ENCODE measurements at regions of chr12 and their contacts with region 1.

Region 1: DNA sequence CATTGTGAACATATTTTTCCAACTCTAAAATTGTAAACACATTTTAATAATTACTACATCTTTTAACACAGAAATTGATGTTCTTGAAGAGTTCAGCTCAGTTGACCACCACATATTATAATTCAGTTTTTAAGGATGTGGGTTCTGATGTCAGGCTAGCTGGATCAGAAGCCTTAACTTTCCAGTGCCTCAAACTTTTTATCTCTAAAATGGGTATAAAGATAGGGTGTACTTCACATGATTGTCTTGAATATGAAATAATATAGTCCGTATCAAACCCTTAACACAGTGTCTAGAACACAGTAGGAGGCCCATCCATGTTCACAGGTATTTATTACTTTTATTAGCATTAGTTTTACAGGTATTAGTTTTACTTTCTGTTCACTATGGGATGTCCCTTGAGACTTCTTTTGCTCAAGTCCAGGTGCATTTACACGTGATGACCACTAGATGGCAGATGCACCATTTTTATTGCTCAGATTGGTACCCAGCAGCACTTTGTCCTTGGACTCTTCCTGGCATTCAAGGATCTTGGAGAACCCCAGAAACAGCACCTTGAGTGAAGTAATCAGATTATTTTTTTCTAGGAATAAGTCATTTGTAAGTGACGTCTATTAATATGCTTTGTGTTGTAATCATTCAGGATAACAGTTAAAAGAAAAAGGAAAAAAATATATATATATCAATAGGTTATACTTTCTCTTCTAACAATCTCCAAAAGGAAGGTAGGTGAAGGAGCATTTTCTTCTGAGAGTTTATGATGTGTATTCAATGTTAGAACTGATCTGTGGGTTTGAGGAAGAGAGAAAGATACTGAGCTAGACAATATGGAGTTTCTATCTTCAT is 580.2 kb downstream of the ETNK1 start:
- DNase-seq: peak; percentile 6
- ATAC-seq: no peak; the same call in 1 of the 2 replicates
- H3K4me3 ChIP-seq: no peak overlapping the region
- H3K27ac ChIP-seq: no peak overlapping the region
- H3K4me1 ChIP-seq: no peaks in the 10 kb centered on the region
- H3K27me3 ChIP-seq: no peaks in the 10 kb centered on the region
- CTCF ChIP-seq: peak; percentile 11 to 83 (median 75); a peak in 4 of 6 replicates
- POLR2A ChIP-seq: no peak
- RAD21 ChIP-seq: peak; percentile 51

Region 2: GRCh38 chr12:23169012-23169695 is 36.0 kb before region 1 on chr12:
- CTCF ChIA-PET with region 1: no interaction called
- POLR2A ChIA-PET with region 1: no interaction called
- RAD21 ChIA-PET with region 1: no interaction called
- intact Hi-C with region 1: no loop called
- DNase-seq: no peak
- ATAC-seq: no peak
- H3K4me3 ChIP-seq: no peak overlapping the region
- H3K27ac ChIP-seq: no peak overlapping the region
- H3K4me1 ChIP-seq: no peaks in the 10 kb centered on the region
- H3K27me3 ChIP-seq: no peaks in the 10 kb centered on the region
- CTCF ChIP-seq: no peak
- POLR2A ChIP-seq: no peak
- RAD21 ChIP-seq: no peak

Region 3: GRCh38 chr12:23221066-23221465 is 15.9 kb after region 1 on chr12:
- CTCF ChIA-PET with region 1: no interaction called
- POLR2A ChIA-PET with region 1: no interaction called
- RAD21 ChIA-PET with region 1: no interaction called
- intact Hi-C with region 1: no loop called
- DNase-seq: no peak
- ATAC-seq: no peak
- H3K4me3 ChIP-seq: no peak overlapping the region
- H3K27ac ChIP-seq: no peak overlapping the region
- H3K4me1 ChIP-seq: no peaks in the 10 kb centered on the region
- H3K27me3 ChIP-seq: no peaks in the 10 kb centered on the region
- CTCF ChIP-seq: no peak
- POLR2A ChIP-seq: no peak
- RAD21 ChIP-seq: no peak

Region 4: GRCh38 chr12:24838531-24838950 is 1633.4 kb after region 1 on chr12:
- CTCF ChIA-PET with region 1: no interaction called
- POLR2A ChIA-PET with region 1: no interaction called
- RAD21 ChIA-PET with region 1: no interaction called
- intact Hi-C with region 1: loop called (anchors 1 kb)
- DNase-seq: no peak
- ATAC-seq: no peak
- H3K4me3 ChIP-seq: no peak overlapping the region
- H3K27ac ChIP-seq: no peak overlapping the region
- H3K4me1 ChIP-seq: no peaks in the 10 kb centered on the region
- H3K27me3 ChIP-seq: no peaks in the 10 kb centered on the region
- CTCF ChIP-seq: no peak
- POLR2A ChIP-seq: no peak
- RAD21 ChIP-seq: no peak

Region 5: GRCh38 chr12:25119020-25119419 is 1913.9 kb after region 1 on chr12:
- CTCF ChIA-PET with region 1: no interaction called
- POLR2A ChIA-PET with region 1: no interaction called
- RAD21 ChIA-PET with region 1: no interaction called
- intact Hi-C with region 1: loop called (anchors 10 kb)
- DNase-seq: no peak
- ATAC-seq: no peak
- H3K4me3 ChIP-seq: no peak overlapping the region
- H3K27ac ChIP-seq: no peak overlapping the region
- H3K4me1 ChIP-seq: no peaks in the 10 kb centered on the region
- H3K27me3 ChIP-seq: no peaks in the 10 kb centered on the region
- CTCF ChIP-seq: 0 out of 6 replicates have a peak, but pooled peaks of 2 of the 3 experiments have one; percentile 10 to 17
- POLR2A ChIP-seq: no peak
- RAD21 ChIP-seq: no peak

Measured in HCT116 (cell line).